ENCODE measurements at regions of chr14 and their contacts with region 1.

Region 1: GRCh38 chr14:102516531-102517415 is 7.2 kb upstream of the ANKRD9 start:
- DNase-seq: peak in 4 of 5 donors; percentile 70 to 85 (median 72)
- ATAC-seq: peak; percentile 41 to 80 (median 78)
- H3K4me3 ChIP-seq: peak overlapping the region; percentile 51 to 89 (median 74)
- H3K27ac ChIP-seq: peak overlapping the region in 8 of 12 donors; percentile 2 to 83 (median 60)
- H3K4me1 ChIP-seq: peaks cover 0 to 14% (median 4%) of the 10 kb centered on the region in 12 donors
- H3K27me3 ChIP-seq: no peaks in the 10 kb centered on the region
- CTCF ChIP-seq: peak; percentile 67 to 100 (median 92)
- POLR2A ChIP-seq: peak in 1 of 2 donors; percentile 17

Region 2: DNA sequence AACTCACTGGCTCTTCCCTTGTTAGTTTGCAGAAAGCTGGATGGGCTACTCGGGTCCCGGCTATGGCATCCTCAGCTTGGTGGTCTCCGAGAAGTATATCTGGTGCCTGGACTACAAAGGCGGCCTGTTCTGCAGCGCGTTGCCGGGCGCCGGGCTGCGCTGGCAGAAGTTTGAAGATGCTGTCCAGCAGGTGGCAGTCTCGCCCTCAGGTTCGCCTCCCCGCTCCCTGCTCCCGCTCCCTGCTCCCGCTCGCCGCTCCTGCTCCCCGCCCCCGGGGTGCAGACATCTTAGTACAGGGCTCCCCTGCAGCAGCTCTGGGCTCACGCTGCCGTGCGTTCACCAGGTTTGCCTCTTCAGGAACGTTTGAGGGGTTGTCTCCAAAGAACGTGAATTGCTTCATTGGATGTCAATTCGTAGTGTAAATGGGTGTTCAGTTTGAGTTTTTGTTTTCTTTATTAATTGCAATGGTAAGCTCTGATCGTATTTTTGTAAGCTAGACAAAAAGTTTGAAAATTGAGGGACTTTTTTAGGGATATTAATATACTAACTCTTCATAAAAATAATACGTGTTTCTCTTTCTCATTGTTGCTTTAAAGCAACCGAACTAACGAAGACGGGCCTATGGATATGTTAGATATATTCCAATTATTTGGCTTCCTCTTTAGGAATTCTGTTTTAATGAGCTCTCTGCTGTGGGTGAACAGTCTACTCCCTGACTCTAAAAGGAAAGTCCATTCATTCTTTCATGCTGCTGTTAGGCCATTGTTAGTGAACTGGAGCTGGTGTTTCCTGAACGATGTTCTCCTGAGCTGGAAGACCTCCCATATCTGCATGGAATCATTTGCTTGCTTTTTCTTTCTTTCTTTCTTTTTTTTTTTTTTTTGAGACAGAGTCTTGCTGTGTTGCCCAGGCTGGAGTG is 78.5 kb before region 1 on chr14:
- intact Hi-C with region 1: loop called (anchors 1 to 2 kb)
- DNase-seq: peak; percentile 89 to 92 (median 90)
- ATAC-seq: peak; percentile 88 to 97 (median 96)
- H3K4me3 ChIP-seq: peak overlapping the region in 9 of 12 donors; percentile 2 to 49 (median 39)
- H3K27ac ChIP-seq: peak overlapping the region in 4 of 12 donors; percentile 17 to 61 (median 30)
- H3K4me1 ChIP-seq: peaks cover 0 to 10% (median 3%) of the 10 kb centered on the region in 12 donors
- H3K27me3 ChIP-seq: no peaks in the 10 kb centered on the region
- CTCF ChIP-seq: peak; percentile 67 to 92 (median 81)
- POLR2A ChIP-seq: no peak